ENCODE measurements at regions of chr7 and their contacts with region 1.

Region 1: DNA sequence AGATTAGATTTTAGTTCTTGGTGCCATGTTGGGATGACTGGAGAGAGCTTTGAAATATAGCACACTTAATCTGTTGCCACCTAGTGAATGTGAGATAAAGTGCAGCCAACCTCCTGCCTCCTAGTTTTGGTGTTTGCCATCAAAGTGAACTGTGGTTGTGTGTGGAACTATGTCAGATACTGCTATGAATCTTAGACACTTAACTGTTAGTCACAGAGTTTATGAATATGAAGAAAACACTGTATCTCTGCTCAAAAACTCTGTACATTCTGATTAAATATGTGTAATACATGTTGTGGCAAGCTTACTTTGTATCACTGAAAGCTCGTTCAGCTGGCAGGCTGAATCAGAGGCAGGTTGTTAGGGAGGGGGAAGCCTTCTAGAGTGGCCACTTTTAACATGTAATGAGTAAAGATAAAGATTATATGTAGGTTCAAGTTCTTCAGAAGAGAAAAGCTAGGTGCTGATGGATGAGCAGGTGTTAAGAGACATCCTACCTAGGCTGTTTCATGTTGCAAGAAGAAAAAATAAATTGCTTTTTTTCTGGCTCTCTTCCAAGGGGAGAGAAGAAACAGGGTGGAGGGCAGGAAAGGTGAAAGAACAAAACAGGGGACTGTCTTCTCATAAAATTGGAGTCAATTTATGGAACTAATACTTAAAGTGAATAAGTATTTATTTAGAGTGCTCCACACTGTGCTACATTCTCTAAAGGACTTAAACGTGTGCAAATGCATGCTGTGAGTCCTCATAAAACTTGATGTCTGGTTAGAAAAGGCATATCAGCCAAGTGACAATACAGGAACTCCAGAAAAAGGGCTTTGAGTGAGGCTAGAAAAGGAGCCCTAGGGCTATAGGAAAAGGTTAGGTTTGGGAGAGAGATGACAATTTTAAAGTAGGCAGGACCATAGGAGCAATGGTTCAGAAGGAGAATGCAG is 14.1 kb upstream of the LAMB1 start:
- DNase-seq: peak; percentile 75
- ATAC-seq: peak; percentile 61
- H3K4me3 ChIP-seq: no peak overlapping the region
- H3K27ac ChIP-seq: peak overlapping the region; percentile 97
- H3K4me1 ChIP-seq: peaks cover 58% of the 10 kb centered on the region
- H3K27me3 ChIP-seq: no peaks in the 10 kb centered on the region
- CTCF ChIP-seq: peak; percentile 69

Region 2: DNA sequence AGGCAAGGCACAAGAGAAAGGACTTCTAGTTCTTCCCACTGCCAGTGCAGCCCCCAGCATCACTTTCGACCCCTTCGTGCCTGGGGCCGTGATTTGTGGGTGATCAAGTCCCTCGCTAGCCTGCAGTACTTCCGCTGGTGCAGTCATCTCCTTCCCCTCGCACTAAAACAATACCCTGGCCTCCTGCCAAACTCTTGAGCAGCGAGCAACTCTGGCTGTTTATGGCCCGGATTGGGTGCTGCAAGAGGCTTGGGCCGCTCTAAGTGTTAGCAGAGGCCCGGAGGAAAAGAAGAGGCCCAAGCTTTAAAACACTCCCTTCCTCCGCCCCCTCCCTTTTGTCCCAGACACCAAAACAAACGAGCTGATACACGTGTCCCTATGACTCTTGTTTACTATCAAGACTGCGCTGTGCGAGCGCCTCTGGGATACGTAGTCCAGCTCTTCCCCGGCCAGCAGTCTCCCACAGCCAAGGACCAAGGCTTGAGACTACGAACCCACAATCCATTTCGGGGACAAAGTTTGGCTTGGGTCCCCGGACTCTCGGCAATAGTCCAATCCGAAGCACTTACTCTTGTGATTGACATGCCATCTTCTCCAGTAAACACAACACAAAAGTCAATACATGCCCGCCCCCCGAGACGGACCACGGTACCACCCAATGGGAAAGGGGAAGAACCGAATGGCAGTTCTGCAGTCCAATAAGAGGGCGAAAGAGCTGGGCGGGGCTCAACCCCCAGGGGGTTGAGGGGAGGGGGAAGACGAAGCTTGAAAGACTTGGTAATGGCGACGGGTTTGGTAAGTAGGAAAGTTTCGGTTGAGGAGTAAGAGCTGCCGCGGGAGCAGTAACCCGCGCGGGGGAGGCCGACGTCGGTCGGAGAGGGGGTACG is 848.6 kb before region 1 on chr7 and contains the start of gene HBP1:
- CTCF ChIA-PET with region 1: interaction called, 7 read pairs
- POLR2A ChIA-PET with region 1: no interaction called
- intact Hi-C with region 1: loop called (anchors 10 kb)
- DNase-seq: peak; percentile 99
- ATAC-seq: peak; percentile 90
- H3K4me3 ChIP-seq: peak within 1 kb of the TSS; percentile 86
- H3K27ac ChIP-seq: peak within 1 kb of the TSS; percentile 65
- H3K4me1 ChIP-seq: peaks cover 20% of the 10 kb centered on the region
- H3K27me3 ChIP-seq: no peaks in the 10 kb centered on the region
- CTCF ChIP-seq: no peak
- total RNA-seq, gene HBP1: 13.0 and 17.6 TPM in 2 replicates

Region 3: GRCh38 chr7:107788662-107789061 is 228.4 kb before region 1 on chr7:
- CTCF ChIA-PET with region 1: no interaction called
- POLR2A ChIA-PET with region 1: no interaction called
- intact Hi-C with region 1: no loop called
- DNase-seq: no peak
- ATAC-seq: no peak
- H3K4me3 ChIP-seq: no peak overlapping the region
- H3K27ac ChIP-seq: no peak overlapping the region
- H3K4me1 ChIP-seq: no peaks in the 10 kb centered on the region
- H3K27me3 ChIP-seq: peaks cover 16% of the 10 kb centered on the region
- CTCF ChIP-seq: no peak

Region 4: GRCh38 chr7:107902381-107902780 is 114.7 kb before region 1 on chr7:
- CTCF ChIA-PET with region 1: no interaction called
- POLR2A ChIA-PET with region 1: no interaction called
- intact Hi-C with region 1: no loop called
- DNase-seq: no peak
- ATAC-seq: no peak
- H3K4me3 ChIP-seq: no peak overlapping the region
- H3K27ac ChIP-seq: no peak overlapping the region
- H3K4me1 ChIP-seq: no peaks in the 10 kb centered on the region
- H3K27me3 ChIP-seq: no peaks in the 10 kb centered on the region
- CTCF ChIP-seq: no peak

Region 5: GRCh38 chr7:107966711-107967110 is 50.4 kb before region 1 on chr7:
- CTCF ChIA-PET with region 1: no interaction called
- POLR2A ChIA-PET with region 1: no interaction called
- intact Hi-C with region 1: loop called (anchors 1 kb)
- DNase-seq: peak; percentile 89
- ATAC-seq: peak; percentile 87
- H3K4me3 ChIP-seq: no peak overlapping the region
- H3K27ac ChIP-seq: peak overlapping the region; percentile 61
- H3K4me1 ChIP-seq: peaks cover 26% of the 10 kb centered on the region
- H3K27me3 ChIP-seq: no peaks in the 10 kb centered on the region
- CTCF ChIP-seq: no peak

Region 6: GRCh38 chr7:107995184-107996071 is 21.7 kb before region 1 on chr7:
- CTCF ChIA-PET with region 1: interaction called, 4 read pairs
- POLR2A ChIA-PET with region 1: no interaction called
- intact Hi-C with region 1: loop called (anchors 1 kb)
- DNase-seq: peak; percentile 91
- ATAC-seq: peak; percentile 68
- H3K4me3 ChIP-seq: peak overlapping the region; percentile 22; the same call in 1 of the 2 replicates
- H3K27ac ChIP-seq: peak overlapping the region; percentile 88
- H3K4me1 ChIP-seq: peaks cover 65% of the 10 kb centered on the region
- H3K27me3 ChIP-seq: no peaks in the 10 kb centered on the region
- CTCF ChIP-seq: no peak

Region 7: GRCh38 chr7:108094933-108095710 is 78.0 kb after region 1 on chr7:
- CTCF ChIA-PET with region 1: interaction called, 3 read pairs
- POLR2A ChIA-PET with region 1: interaction called, 4 read pairs
- intact Hi-C with region 1: loop called (anchors 1 kb)
- DNase-seq: peak; percentile 80
- ATAC-seq: peak; percentile 96
- H3K4me3 ChIP-seq: peak overlapping the region; percentile 28; the same call in 1 of the 2 replicates
- H3K27ac ChIP-seq: peak overlapping the region; percentile 7; the same call in 1 of the 2 replicates
- H3K4me1 ChIP-seq: peaks cover 27% of the 10 kb centered on the region
- H3K27me3 ChIP-seq: no peaks in the 10 kb centered on the region
- CTCF ChIP-seq: no peak

Region 8: GRCh38 chr7:108189733-108190388 is 172.8 kb after region 1 on chr7:
- CTCF ChIA-PET with region 1: no interaction called
- POLR2A ChIA-PET with region 1: no interaction called
- intact Hi-C with region 1: no loop called
- DNase-seq: no peak
- ATAC-seq: no peak
- H3K4me3 ChIP-seq: no peak overlapping the region
- H3K27ac ChIP-seq: no peak overlapping the region
- H3K4me1 ChIP-seq: peaks cover 19% of the 10 kb centered on the region; the same call in 1 of the 2 replicates
- H3K27me3 ChIP-seq: no peaks in the 10 kb centered on the region
- CTCF ChIP-seq: no peak

Measured in PC-3 (cell line).